Gastrocnemius medialis (tissue), 4 donors: ENCODE measurements at regions of chr2 and their contacts with region 1.

Region 1: DNA sequence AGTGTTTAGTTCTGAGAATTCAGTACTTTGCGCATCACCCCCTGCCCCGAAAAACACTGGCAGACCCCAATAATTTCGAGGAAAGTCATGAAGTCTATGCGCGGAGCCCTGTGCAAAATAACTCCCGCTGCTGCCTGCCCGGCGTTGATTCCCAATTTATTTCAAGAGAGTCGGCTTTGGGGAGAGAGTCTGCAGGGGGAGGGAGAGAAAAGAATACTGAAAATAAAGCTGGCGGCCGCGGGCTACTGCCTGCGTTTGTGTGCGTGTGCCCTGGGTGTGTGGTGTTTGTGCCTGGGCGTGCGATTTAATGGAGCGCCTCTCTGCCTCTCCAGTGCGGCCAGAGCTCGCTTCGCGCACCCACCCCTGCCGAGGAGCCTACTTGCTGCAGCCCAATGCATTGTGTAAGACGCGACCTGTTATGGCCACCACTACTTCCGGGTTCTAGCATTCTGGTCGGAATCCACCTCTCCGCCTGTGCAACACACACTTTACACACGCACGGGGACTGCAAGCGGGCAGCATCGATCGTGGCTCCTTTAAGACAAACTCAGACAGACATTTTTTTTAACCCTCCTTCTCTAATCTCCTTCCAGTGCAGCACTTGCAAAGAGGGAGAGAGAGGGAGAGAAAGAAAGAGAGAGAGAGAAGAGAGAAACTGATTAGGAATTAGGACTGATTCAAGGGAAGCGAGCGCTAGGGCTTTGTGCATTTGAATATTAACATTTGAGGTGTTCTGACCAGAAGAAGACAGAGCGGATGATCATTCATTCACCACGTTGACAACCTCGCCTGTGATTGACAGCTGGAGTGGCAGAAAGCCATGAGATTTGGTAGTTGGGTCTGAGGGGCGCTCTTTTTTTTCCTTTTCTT is at the start of gene MEIS1:
- DNase-seq: peak; percentile 91
- ATAC-seq: peak; percentile 82 to 83
- H3K4me3 ChIP-seq: peak within 1 kb of the TSS; percentile 80 to 96 (median 88)
- H3K27ac ChIP-seq: peak within 1 kb of the TSS; percentile 83 to 89 (median 87)
- H3K4me1 ChIP-seq: peaks cover 0 to 18% of the 10 kb centered on the region in 2 donors
- H3K27me3 ChIP-seq: no peaks in the 10 kb centered on the region
- CTCF ChIP-seq: no peak
- POLR2A ChIP-seq: peak; percentile 69 to 81
- total RNA-seq, gene MEIS1: 1.3 to 8.2 (median 2.0) TPM

Region 2: DNA sequence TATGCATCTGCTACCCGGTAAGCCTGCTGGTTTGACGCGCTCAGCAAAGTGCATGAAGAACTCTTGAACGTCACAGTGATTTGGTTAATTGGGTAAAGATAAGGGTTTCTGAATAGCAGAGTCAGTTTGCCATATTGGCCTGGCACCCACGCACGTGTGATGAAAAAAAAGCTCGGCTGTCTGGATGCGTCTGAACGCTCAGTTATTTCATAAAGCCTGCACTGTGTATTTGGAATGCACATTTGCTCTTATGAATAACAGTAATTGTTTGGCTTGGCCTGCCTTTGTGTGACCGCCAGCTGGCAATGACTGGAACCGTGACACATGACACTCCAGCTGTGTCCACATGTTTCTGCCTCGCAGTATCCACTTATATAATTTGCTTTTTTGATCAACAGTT is 129.2 kb before region 1 on chr2:
- in situ Hi-C with region 1: no loop called
- intact Hi-C with region 1: loop called (anchors 5 kb)
- DNase-seq: peak; percentile 20 to 56
- ATAC-seq: peak; percentile 26 to 46
- H3K4me3 ChIP-seq: no peak overlapping the region
- H3K27ac ChIP-seq: no peak overlapping the region
- H3K4me1 ChIP-seq: peaks cover 6 to 11% of the 10 kb centered on the region in 2 donors
- H3K27me3 ChIP-seq: peaks cover 0 to 2% (median 0%) of the 10 kb centered on the region in 3 donors
- CTCF ChIP-seq: no peak
- POLR2A ChIP-seq: no peak

Region 3: DNA sequence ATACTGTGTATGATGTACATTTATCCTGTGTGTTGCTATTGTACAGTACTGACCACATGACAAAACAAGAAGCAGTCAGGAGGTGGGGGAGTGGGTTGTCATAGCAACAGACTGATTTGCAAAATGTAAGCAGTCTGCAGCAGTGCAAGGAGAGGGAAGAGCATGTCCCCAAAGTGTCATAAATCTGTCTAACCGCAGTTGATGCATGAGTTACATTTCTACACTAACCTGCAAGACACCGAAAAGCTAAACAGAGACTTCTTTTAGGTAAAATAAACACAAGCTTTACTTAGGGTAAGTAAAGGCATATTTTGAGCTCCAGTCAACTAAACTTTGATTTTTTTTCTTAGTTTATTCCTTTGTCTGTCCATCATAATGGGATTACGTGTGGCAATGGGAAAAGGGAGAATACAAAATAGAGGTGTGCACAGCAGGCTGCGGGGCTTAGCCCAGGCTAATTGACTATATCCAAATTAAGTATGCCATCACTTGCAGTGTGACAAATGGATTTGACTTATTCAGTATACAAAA is 134.5 kb after region 1 on chr2:
- in situ Hi-C with region 1: no loop called
- intact Hi-C with region 1: no loop called
- DNase-seq: no peak
- ATAC-seq: no peak
- H3K4me3 ChIP-seq: no peak overlapping the region
- H3K27ac ChIP-seq: no peak overlapping the region
- H3K4me1 ChIP-seq: no peaks in the 10 kb centered on the region
- H3K27me3 ChIP-seq: peaks cover 16 to 24% (median 19%) of the 10 kb centered on the region in 3 donors
- CTCF ChIP-seq: no peak
- POLR2A ChIP-seq: no peak

Region 4: DNA sequence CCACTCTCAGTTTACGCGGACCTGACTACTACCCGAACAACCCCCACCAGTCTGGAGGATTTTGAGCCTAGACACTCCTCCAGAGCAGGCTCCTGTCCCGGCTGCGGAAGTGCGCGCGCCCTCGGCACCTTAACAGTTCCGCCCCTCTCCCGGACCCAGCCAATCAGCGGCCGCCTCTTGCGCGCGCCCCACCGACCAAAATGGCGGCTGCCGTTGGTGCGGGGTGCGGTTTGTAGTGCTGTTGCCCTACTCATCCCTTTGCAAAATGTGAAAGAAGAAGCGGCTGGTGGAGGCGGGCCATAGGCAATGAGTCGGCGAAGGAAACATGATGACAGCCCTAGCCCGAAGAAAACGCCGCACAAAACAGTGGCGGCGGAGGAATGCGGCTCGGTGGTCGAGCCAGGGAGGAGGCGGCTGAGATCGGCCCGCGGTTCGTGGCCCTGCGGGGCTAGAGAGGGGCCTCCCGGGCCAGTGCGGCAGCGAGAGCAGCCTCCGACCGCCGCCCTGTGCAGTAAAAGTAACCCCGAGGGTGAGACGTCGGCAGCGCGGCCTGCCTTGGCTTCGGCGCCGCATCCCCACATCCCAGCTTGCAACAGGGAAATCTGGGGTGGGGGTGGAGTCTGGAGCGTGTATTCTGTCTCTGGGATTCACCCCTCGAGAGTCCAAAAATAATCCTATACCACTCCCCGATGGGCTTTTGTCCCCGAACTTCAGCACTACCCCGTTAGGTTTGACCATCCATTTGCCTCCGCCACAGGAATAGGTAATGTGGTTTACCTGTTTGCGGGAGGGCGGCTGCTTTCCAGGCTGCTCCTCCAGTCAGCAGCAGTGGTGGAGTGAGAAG is 962.5 kb after region 1 on chr2 and contains the start of gene ETAA1:
- in situ Hi-C with region 1: no loop called
- intact Hi-C with region 1: loop called (anchors 5 kb)
- DNase-seq: peak; percentile 85 to 88
- ATAC-seq: peak; percentile 98
- H3K4me3 ChIP-seq: peak within 1 kb of the TSS; percentile 83 to 95 (median 89)
- H3K27ac ChIP-seq: peak within 1 kb of the TSS; percentile 82 to 90 (median 90)
- H3K4me1 ChIP-seq: no peaks in the 10 kb centered on the region
- H3K27me3 ChIP-seq: no peaks in the 10 kb centered on the region
- CTCF ChIP-seq: no peak
- POLR2A ChIP-seq: peak; percentile 61 to 65
- total RNA-seq, gene ETAA1: 4.1 to 7.8 (median 4.9) TPM

Region 5: GRCh38 chr2:67650291-67651133 is 1215.6 kb after region 1 on chr2:
- in situ Hi-C with region 1: loop called in 2 of 4 experiments (anchors 25 kb)
- intact Hi-C with region 1: loop called (anchors 2 kb)
- DNase-seq: peak; percentile 74 to 83
- ATAC-seq: peak; percentile 84 to 86
- H3K4me3 ChIP-seq: no peak overlapping the region
- H3K27ac ChIP-seq: peak overlapping the region; percentile 64 to 71 (median 66)
- H3K4me1 ChIP-seq: peaks cover 25 to 26% of the 10 kb centered on the region in 2 donors
- H3K27me3 ChIP-seq: no peaks in the 10 kb centered on the region
- CTCF ChIP-seq: peak; percentile 42 to 74 (median 53)
- POLR2A ChIP-seq: no peak

Region 6: DNA sequence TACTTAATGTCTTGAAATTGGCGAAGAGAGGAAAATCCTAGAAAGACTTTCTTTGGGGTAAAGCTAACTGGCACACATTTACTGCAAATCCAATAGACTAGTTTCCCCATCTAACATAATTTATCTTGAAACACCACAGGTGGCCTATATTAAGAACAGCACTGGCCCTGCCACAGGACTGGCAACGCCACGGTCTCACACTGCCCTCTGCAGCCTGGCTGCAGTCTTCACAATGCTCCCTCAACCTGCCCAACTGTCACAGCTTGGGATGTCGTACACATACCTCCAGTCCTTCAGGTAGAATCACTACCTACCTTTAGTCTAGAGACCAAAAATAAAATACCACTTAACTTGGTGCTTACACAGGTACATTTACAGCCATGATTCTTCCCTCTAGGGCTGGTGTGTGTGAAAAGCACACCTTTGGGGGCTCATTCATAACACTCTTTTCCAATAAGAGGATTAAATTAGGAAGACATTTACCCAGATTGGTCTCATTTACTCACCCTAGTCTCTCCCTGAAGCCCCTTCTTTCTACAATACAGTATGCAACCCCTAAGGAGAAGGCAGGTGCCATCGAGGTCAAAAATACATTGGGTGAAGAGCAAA is 1405.7 kb after region 1 on chr2:
- in situ Hi-C with region 1: loop called in 3 of 4 experiments (anchors 10 kb)
- intact Hi-C with region 1: no loop called
- DNase-seq: peak; percentile 30 to 35
- ATAC-seq: peak; percentile 79 to 85
- H3K4me3 ChIP-seq: no peak overlapping the region
- H3K27ac ChIP-seq: no peak overlapping the region
- H3K4me1 ChIP-seq: peaks cover 0 to under 1% of the 10 kb centered on the region in 2 donors
- H3K27me3 ChIP-seq: no peaks in the 10 kb centered on the region
- CTCF ChIP-seq: peak; percentile 61 to 80 (median 69)
- POLR2A ChIP-seq: no peak

Region 7: GRCh38 chr2:68031542-68032160 is 1596.7 kb after region 1 on chr2:
- in situ Hi-C with region 1: loop called in 1 of 4 experiments (anchors 25 kb)
- intact Hi-C with region 1: no loop called
- DNase-seq: no peak
- ATAC-seq: no peak
- H3K4me3 ChIP-seq: no peak overlapping the region
- H3K27ac ChIP-seq: no peak overlapping the region
- H3K4me1 ChIP-seq: peaks cover 0 to 5% of the 10 kb centered on the region in 2 donors
- H3K27me3 ChIP-seq: no peaks in the 10 kb centered on the region
- CTCF ChIP-seq: peak; percentile 22 to 60 (median 52)
- POLR2A ChIP-seq: no peak